Activated naive CD4-positive, alpha-beta T cell treated with anti-CD3 and anti-CD28 coated beads, Interleukin-2, amount 10 ng/mL, durations not matched to agents 7 days and 5 days (primary cell): ENCODE measurements at regions of chr1 and their contacts with region 1.

Region 1: DNA sequence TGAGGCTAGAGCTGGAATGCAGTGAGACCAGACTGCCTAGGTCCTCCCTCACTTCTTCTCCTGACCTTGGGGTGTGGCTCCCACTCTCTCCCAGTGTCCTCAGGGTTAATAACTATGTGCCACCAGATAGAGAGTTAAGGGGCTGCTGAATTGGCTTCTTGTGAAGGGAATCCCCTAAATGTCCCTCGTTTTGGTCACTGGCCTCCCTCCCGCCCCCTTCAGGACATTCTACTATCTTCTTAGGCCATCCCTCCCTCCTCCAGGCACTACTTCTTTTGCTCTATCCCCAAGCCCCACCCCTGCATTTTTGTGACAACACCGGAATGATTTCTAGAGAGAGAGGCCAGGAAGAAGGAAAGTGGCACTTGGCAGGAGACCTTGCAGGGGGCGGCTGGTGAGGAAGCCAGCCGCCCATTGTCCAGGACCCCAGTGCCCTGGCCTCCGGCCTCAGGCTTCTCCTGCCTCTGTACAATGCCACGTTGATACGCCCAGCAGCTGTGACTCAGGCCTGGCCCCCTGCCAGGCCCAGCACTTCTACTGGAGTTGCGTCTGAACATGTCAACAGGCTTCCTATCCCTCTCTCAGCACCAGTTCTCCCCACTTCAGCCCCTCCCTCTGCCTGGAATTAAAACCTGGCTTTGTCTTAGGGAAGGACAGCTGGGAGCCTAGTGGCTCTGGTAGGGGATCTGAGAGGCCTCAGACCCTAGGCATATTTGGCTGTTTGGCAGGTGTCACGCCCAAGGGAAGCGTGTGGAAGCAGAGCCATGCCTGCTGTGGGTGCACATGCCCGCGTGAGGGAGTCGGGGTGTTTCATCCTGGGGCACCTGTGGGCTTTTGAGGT is 9.1 kb downstream of the LMNA start:
- DNase-seq: peak; percentile 32
- H3K4me3 Mint-ChIP-seq: no peak overlapping the region
- H3K27ac Mint-ChIP-seq: no peak overlapping the region
- H3K4me1 Mint-ChIP-seq: peaks cover 65% of the 10 kb centered on the region
- H3K27me3 Mint-ChIP-seq: peaks cover 78% of the 10 kb centered on the region

Region 2: DNA sequence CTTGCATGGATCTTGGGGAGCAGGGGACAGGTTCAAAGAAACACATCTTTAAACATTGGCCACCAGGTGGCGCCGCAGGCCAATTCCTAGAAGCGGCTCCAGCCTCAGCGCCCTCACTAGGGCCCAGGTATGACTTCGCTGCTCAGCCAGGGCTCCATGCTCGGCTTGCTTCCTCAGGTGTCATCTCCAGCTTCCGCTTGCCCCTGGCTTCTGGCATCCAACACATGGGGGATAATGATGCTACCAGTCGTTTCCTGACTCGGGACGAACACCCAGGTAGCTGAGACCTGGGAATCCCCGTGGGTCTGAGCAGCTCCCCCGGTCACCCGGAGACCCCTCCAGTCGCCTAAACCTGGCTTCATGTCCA is 32.8 kb before region 1 on chr1:
- CTCF ChIA-PET with region 1: interaction called, 668 read pairs
- DNase-seq: peak; percentile 93
- H3K4me3 Mint-ChIP-seq: no peak overlapping the region
- H3K27ac Mint-ChIP-seq: no peak overlapping the region
- H3K4me1 Mint-ChIP-seq: peaks cover 3% of the 10 kb centered on the region
- H3K27me3 Mint-ChIP-seq: peaks cover 88% of the 10 kb centered on the region

Region 3: GRCh38 chr1:156096640-156097391 is 26.8 kb before region 1 on chr1:
- CTCF ChIA-PET with region 1: interaction called, 668 read pairs
- DNase-seq: peak; percentile 87
- H3K4me3 Mint-ChIP-seq: peak overlapping the region; percentile 22
- H3K27ac Mint-ChIP-seq: peak overlapping the region; percentile 25
- H3K4me1 Mint-ChIP-seq: peaks cover 20% of the 10 kb centered on the region
- H3K27me3 Mint-ChIP-seq: peaks cover 88% of the 10 kb centered on the region